Adrenal gland (tissue), 19 donors: ENCODE measurements at regions of chr5 and their contacts with region 1.

Region 1: GRCh38 chr5:160508780-160509361 is 87.2 kb downstream of the PTTG1 start:
- DNase-seq: peak; percentile 60 to 77 (median 65)
- H3K4me3 ChIP-seq: no peak overlapping the region
- H3K27ac ChIP-seq: no peak overlapping the region
- H3K4me1 ChIP-seq: peaks cover 0 to 5% of the 10 kb centered on the region in 2 donors
- H3K27me3 ChIP-seq: no peaks in the 10 kb centered on the region
- CTCF ChIP-seq: peak; percentile 86 to 91 (median 87)
- POLR2A ChIP-seq: no peak

Region 2: GRCh38 chr5:160441311-160441781 is 67.5 kb before region 1 on chr5:
- intact Hi-C with region 1: loop called in 1 of 2 experiments (anchors 10 kb)
- DNase-seq: no peak
- H3K4me3 ChIP-seq: no peak overlapping the region
- H3K27ac ChIP-seq: no peak overlapping the region
- H3K4me1 ChIP-seq: peaks cover 4 to 7% of the 10 kb centered on the region in 2 donors
- H3K27me3 ChIP-seq: no peaks in the 10 kb centered on the region
- CTCF ChIP-seq: no peak
- POLR2A ChIP-seq: no peak